ENCODE measurements at regions of chr11 and their contacts with region 1.

Region 1: GRCh38 chr11:1896923-1897322 is 5.2 kb upstream of the PRR33 start:
- DNase-seq: no peak
- ATAC-seq: no peak
- H3K4me3 ChIP-seq: no peak overlapping the region
- H3K4me1 ChIP-seq: no peaks in the 10 kb centered on the region
- CTCF ChIP-seq: no peak

Region 2: DNA sequence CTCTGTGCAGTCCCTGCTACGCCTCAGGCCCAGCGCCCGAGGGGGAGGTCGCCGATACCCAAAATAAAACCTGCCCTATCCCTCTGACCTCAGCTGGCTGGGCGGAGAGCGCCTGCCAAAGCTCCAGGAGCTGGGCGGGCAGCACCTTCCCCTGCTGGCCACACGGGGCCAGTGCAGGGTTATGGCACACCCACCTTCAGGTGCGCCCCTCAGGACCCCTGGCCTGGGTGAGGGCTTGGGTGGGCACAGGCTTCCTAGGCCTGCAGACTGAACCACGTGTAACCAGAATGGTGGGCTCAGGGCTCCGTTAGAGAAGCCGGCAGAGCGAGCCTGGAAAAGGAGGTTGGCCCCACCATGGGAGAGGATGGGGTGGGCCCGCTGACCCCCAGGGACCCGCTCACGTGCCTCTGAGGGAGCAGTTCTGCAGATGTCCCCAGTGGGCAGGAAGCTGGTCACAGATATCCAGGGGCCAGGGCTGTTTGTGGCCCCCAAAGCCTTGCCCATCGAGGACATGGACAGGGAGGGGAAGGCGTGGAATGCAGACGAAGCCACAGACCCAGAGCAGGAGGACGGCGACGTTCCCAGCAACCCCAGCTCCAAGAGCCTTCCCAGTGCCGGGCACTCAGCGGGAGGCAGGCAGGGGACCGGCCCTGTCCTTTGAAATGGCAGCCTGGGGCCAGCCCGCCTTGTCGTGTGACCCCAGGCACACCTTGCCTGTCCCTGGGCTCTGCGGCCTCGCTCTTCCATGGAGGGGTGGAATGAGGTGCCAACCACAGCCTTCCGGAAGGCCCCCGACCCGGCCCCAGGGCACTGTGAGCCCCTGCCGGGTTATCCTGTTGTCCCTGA is 21.0 kb after region 1 on chr11:
- intact Hi-C with region 1: loop called (anchors 1 to 2 kb)
- DNase-seq: peak in 1 of 3 donors; percentile 51
- ATAC-seq: peak; percentile 42
- H3K4me3 ChIP-seq: no peak overlapping the region
- H3K4me1 ChIP-seq: no peaks in the 10 kb centered on the region
- CTCF ChIP-seq: peak; percentile 20

Region 3: DNA sequence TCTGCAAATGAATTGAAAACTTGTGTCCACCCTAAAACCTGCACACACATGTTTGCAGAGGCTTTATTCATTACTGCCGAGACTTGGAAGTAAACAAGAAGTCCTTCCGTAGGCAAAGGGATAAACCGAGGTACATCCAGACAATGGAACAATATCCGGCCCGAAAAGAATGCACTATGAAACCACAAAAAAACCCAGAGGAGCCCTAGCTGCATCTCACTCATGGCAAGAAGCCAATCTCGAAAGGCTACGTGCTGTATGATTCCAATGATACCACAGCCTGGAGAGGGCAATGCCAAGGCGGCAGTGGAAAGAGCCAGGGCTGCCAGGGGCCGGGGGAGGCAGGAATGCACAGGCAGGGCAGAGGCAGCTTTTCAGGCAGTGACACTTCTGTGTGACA is 47.1 kb after region 1 on chr11:
- intact Hi-C with region 1: loop called in 1 of 2 experiments (anchors 5 kb)
- DNase-seq: peak in 1 of 3 donors; percentile 17
- ATAC-seq: no peak
- H3K4me3 ChIP-seq: no peak overlapping the region
- H3K4me1 ChIP-seq: no peaks in the 10 kb centered on the region
- CTCF ChIP-seq: no peak

Region 4: GRCh38 chr11:2114430-2115241 is 217.7 kb after region 1 on chr11:
- intact Hi-C with region 1: no loop called
- DNase-seq: peak in 2 of 3 donors; percentile 11 to 31
- ATAC-seq: no peak
- H3K4me3 ChIP-seq: no peak overlapping the region
- H3K4me1 ChIP-seq: no peaks in the 10 kb centered on the region
- CTCF ChIP-seq: no peak

Measured in mucosa of descending colon (tissue), 3 donors.